ENCODE measurements at regions of chr17 and their contacts with region 1.

Region 1: DNA sequence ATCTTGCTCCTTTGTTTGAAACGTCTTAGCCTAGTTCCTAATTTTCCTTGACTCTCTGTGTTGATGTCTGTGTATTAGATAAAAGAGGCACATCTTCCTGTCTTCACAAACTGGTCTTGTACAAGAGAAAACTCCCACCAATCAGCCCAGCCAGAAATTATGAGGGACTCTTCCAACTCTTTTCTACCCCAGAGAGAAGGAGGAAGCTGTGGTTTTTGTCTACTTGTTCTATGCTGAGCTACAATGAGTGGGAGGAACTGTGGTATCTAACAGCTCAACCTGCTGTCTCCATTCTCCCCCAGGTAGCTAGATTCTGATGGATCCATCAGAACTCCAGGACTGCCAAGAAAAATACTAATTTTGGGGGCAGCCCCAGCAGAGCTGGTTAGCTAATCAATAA is 392.5 kb downstream of the HS3ST3B1 start:
- DNase-seq: no peak
- ATAC-seq: no peak
- H3K4me3 ChIP-seq: no peak overlapping the region
- H3K27ac ChIP-seq: no peak overlapping the region
- H3K4me1 ChIP-seq: no peaks in the 10 kb centered on the region
- H3K27me3 ChIP-seq: no peaks in the 10 kb centered on the region
- CTCF ChIP-seq: no peak
- EP300 ChIP-seq: no peak
- POLR2A ChIP-seq: no peak
- RAD21 ChIP-seq: no peak

Region 2: GRCh38 chr17:14664511-14664910 is 28.9 kb before region 1 on chr17:
- CTCF ChIA-PET with region 1: no interaction called
- POLR2A ChIA-PET with region 1: no interaction called
- RAD21 ChIA-PET with region 1: no interaction called
- SMC1A ChIA-PET with region 1: no interaction called
- in situ Hi-C with region 1: no loop called
- intact Hi-C with region 1: no loop called
- DNase-seq: no peak
- ATAC-seq: no peak
- H3K4me3 ChIP-seq: no peak overlapping the region
- H3K27ac ChIP-seq: no peak overlapping the region
- H3K4me1 ChIP-seq: no peaks in the 10 kb centered on the region
- H3K27me3 ChIP-seq: no peaks in the 10 kb centered on the region
- CTCF ChIP-seq: no peak
- EP300 ChIP-seq: no peak
- POLR2A ChIP-seq: no peak
- RAD21 ChIP-seq: no peak

Region 3: DNA sequence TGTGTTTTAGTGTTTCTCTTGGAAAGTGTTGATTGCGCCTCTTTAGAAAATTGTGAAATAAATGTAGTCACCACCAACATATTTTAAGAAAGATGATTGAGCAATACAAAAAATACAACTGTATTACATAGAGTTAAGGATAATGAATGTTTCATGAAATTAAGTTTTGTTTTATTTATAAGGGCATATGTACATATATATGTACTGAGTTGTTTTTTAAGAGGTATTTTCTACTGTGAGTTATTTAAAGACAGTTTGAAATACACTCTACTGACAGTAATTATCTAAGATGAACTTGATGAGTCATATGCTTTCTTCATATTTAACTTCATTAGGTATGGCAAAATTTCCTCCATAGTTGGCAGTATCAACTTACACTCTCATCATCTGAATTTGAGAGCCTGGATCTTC is 19.2 kb after region 1 on chr17:
- CTCF ChIA-PET with region 1: no interaction called
- POLR2A ChIA-PET with region 1: no interaction called
- RAD21 ChIA-PET with region 1: no interaction called
- SMC1A ChIA-PET with region 1: no interaction called
- in situ Hi-C with region 1: no loop called
- intact Hi-C with region 1: loop called (anchors 2 kb)
- DNase-seq: no peak
- ATAC-seq: no peak
- H3K4me3 ChIP-seq: no peak overlapping the region
- H3K27ac ChIP-seq: no peak overlapping the region
- H3K4me1 ChIP-seq: no peaks in the 10 kb centered on the region
- H3K27me3 ChIP-seq: no peaks in the 10 kb centered on the region
- CTCF ChIP-seq: no peak
- EP300 ChIP-seq: no peak
- POLR2A ChIP-seq: no peak
- RAD21 ChIP-seq: no peak

Region 4: GRCh38 chr17:14725729-14726128 is 32.3 kb after region 1 on chr17:
- CTCF ChIA-PET with region 1: no interaction called
- POLR2A ChIA-PET with region 1: no interaction called
- RAD21 ChIA-PET with region 1: no interaction called
- SMC1A ChIA-PET with region 1: no interaction called
- in situ Hi-C with region 1: no loop called
- intact Hi-C with region 1: no loop called
- DNase-seq: no peak
- ATAC-seq: no peak
- H3K4me3 ChIP-seq: no peak overlapping the region
- H3K27ac ChIP-seq: no peak overlapping the region
- H3K4me1 ChIP-seq: no peaks in the 10 kb centered on the region
- H3K27me3 ChIP-seq: no peaks in the 10 kb centered on the region
- CTCF ChIP-seq: no peak
- EP300 ChIP-seq: no peak
- POLR2A ChIP-seq: no peak
- RAD21 ChIP-seq: no peak